ENCODE measurements at regions of chr3 and their contacts with region 1.

Region 1: DNA sequence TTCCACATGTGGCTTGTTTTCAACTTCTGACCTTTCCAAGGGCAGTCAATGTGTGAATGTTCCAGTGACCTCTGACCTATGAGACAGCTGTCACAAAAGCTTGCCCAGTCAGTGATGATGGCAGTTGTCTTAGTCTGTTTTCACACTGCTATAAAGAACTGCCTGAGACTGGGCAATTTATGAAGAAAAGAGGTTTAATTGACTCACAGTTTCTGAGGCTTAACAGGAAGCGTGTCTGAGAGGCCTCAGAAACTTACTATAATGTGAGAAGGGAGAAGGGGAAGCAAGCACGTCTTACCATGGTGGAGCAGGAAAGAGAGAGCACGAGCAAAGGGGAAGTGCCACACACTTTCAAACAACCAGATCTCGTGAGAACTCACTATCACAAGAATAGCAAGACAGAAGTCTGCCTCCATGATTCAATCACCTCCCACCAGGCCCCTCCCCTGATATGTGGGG is 95.6 kb downstream of the ECT2 start:
- DNase-seq: no peak
- H3K4me3 ChIP-seq: no peak overlapping the region
- H3K27ac ChIP-seq: no peak overlapping the region
- H3K4me1 ChIP-seq: no peaks in the 10 kb centered on the region
- H3K27me3 ChIP-seq: no peaks in the 10 kb centered on the region
- CTCF ChIP-seq: no peak

Region 2: GRCh38 chr3:172903642-172904320 is 57.6 kb after region 1 on chr3:
- CTCF ChIA-PET with region 1: no interaction called
- dilution Hi-C with region 1: no loop called
- in situ Hi-C with region 1: no loop called
- intact Hi-C with region 1: no loop called
- DNase-seq: no peak
- H3K4me3 ChIP-seq: no peak overlapping the region
- H3K27ac ChIP-seq: no peak overlapping the region
- H3K4me1 ChIP-seq: no peaks in the 10 kb centered on the region
- H3K27me3 ChIP-seq: peaks cover 7% of the 10 kb centered on the region
- CTCF ChIP-seq: no peak

Region 3: GRCh38 chr3:172918165-172918564 is 72.0 kb after region 1 on chr3:
- CTCF ChIA-PET with region 1: no interaction called
- dilution Hi-C with region 1: no loop called
- in situ Hi-C with region 1: no loop called
- intact Hi-C with region 1: loop called (anchors 10 kb)
- DNase-seq: no peak
- H3K4me3 ChIP-seq: no peak overlapping the region
- H3K27ac ChIP-seq: no peak overlapping the region
- H3K4me1 ChIP-seq: no peaks in the 10 kb centered on the region
- H3K27me3 ChIP-seq: peaks cover 2% of the 10 kb centered on the region
- CTCF ChIP-seq: no peak

Region 4: DNA sequence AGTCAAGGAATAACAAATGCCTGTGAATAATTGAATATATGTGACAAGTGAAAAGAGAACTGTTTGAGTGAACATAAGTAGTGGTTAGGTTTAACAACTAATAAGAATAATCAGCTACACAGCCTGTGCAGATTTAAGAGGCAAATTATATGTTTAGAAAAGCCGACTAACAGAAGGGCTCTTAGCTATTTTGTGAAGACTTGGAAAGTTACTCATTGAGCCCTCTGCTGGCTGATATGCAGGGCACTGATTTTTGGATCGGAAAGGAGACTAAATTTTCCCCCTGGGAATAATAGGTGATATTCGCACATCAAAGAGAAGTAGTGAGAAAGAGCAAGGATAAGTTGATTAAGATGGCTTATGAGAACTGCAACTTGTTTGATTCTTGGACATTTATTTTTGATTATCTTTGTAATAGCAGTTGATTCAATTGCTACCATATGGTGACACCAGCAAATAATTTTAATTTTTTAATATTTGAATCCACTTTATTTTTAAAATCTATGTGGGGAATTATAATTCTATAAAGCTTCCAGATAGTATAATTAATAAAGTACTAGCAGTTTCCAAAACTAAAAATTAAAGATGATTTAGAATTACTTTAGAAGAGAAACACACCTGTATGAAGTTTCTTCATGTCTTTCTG is 707.6 kb after region 1 on chr3:
- CTCF ChIA-PET with region 1: no interaction called
- dilution Hi-C with region 1: no loop called
- in situ Hi-C with region 1: no loop called
- intact Hi-C with region 1: no loop called
- DNase-seq: peak; percentile 4
- H3K4me3 ChIP-seq: no peak overlapping the region
- H3K27ac ChIP-seq: no peak overlapping the region
- H3K4me1 ChIP-seq: no peaks in the 10 kb centered on the region
- H3K27me3 ChIP-seq: no peaks in the 10 kb centered on the region
- CTCF ChIP-seq: peak; percentile 70 to 85